Panc1 (cell line): ENCODE measurements at regions of chr1 and their contacts with region 1.

Region 1: DNA sequence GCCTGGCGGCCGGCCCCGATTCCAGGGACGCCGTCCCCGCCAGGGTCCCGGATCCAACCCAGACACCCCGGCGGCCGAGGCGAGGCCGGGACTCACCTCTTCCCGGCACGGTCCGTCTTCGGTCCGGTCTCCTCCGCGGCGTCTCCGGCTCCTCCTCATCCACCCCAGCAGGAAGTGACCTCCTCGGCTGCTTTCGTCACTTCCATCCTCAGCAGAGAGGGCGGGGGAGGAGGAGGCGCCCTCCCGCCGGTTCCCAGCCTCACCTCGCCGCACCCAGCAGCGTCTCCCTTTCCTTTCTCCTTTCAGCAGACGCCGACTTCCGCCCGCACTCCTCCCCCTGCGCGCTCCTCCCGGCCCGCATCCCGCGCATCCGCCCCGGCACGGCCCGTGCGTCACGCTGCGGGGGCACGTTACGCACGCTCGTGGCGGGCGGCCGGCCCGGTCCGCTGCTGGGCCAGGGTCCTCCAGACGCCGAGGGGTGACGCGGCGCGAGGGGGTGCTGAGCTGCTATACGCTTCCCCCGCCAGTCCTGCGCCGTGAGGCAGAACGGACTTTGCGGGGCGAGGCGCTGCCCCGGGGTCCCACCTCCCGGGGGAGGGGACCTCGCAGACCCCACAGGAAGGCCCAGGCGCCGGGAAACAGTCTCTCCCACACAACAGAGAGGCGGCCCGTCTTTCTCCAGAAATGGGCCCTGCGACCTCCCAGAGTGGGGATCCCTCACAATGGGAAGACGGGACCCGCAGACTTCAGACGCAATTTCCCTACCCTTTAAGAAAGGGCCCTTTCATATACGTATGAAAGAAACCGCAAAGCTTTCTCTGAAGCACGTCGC is at the start of gene ETV3:
- DNase-seq: peak; percentile 36
- ATAC-seq: peak; percentile 98
- H3K4me3 ChIP-seq: peak within 1 kb of the TSS; percentile 97 to 99
- H3K27ac ChIP-seq: peak within 1 kb of the TSS; percentile 87
- H3K4me1 ChIP-seq: peaks cover 18% of the 10 kb centered on the region
- H3K27me3 ChIP-seq: no peaks in the 10 kb centered on the region; the same call in 1 of the 2 replicates
- CTCF ChIP-seq: no peak
- total RNA-seq, gene ETV3: 22.2 TPM

Region 2: GRCh38 chr1:157050836-157051235 is 87.6 kb before region 1 on chr1:
- CTCF ChIA-PET with region 1: no interaction called
- POLR2A ChIA-PET with region 1: no interaction called
- in situ Hi-C with region 1: no loop called
- intact Hi-C with region 1: loop called (anchors 10 kb)
- DNase-seq: no peak
- ATAC-seq: no peak
- H3K4me3 ChIP-seq: no peak overlapping the region
- H3K27ac ChIP-seq: no peak overlapping the region
- H3K4me1 ChIP-seq: no peaks in the 10 kb centered on the region
- H3K27me3 ChIP-seq: no peaks in the 10 kb centered on the region
- CTCF ChIP-seq: no peak

Region 3: GRCh38 chr1:157090196-157090647 is 48.2 kb before region 1 on chr1:
- CTCF ChIA-PET with region 1: interaction called, 8 read pairs
- POLR2A ChIA-PET with region 1: no interaction called
- in situ Hi-C with region 1: no loop called
- intact Hi-C with region 1: loop called (anchors 1 kb)
- DNase-seq: peak; percentile 55
- ATAC-seq: peak; percentile 96
- H3K4me3 ChIP-seq: no peak overlapping the region
- H3K27ac ChIP-seq: no peak overlapping the region
- H3K4me1 ChIP-seq: no peaks in the 10 kb centered on the region
- H3K27me3 ChIP-seq: no peaks in the 10 kb centered on the region
- CTCF ChIP-seq: peak; percentile 94

Region 4: GRCh38 chr1:157156058-157156541 is 17.7 kb after region 1 on chr1:
- CTCF ChIA-PET with region 1: interaction called, 11 read pairs
- POLR2A ChIA-PET with region 1: no interaction called
- in situ Hi-C with region 1: no loop called
- intact Hi-C with region 1: no loop called
- DNase-seq: no peak
- ATAC-seq: peak; percentile 88
- H3K4me3 ChIP-seq: peak overlapping the region in 1 of 2 experiments; percentile 24; a peak in 1 of 4 replicates
- H3K27ac ChIP-seq: no peak overlapping the region
- H3K4me1 ChIP-seq: no peaks in the 10 kb centered on the region; the same call in none of the 2 replicates
- H3K27me3 ChIP-seq: 0 out of 2 replicates have a peak, but pooled peaks cover 4% of the 10 kb centered on the region
- CTCF ChIP-seq: peak; percentile 97